ENCODE measurements at regions of chr11 and their contacts with region 1.

Region 1: DNA sequence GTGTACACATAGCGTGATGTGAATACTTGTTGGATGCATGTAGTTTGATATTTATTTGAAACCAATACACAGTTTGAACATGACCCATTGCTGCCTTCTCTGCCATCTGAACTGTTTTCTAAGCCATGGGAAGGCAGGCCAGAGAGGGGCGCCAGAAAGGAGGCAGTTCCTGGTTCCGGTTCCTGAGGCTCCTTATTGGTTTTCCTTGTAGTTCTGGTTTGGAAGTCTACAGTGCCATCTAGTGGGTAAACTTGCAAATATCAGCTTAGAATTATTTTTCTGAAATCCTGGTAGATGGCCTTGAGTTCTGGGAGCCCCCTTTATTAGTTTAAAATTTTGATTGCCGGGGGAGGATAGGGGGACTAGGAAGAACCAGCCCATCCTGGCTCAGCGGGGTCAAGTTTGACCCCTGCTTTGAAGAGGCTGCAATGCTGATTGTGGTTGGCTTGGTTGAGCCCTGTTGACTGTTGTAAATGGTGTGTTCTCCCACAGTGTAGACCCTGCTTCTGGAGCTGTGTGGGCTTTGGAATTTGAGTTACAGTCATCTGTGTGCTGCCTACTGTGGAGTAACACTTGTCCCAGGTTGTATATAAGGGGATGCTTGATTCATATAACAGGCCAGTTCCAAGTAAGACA is 48.4 kb downstream of the GRAMD1B start:
- DNase-seq: no peak

Region 2: GRCh38 chr11:122951211-122951610 is 527.3 kb before region 1 on chr11:
- intact Hi-C with region 1: no loop called
- DNase-seq: no peak

Region 3: DNA sequence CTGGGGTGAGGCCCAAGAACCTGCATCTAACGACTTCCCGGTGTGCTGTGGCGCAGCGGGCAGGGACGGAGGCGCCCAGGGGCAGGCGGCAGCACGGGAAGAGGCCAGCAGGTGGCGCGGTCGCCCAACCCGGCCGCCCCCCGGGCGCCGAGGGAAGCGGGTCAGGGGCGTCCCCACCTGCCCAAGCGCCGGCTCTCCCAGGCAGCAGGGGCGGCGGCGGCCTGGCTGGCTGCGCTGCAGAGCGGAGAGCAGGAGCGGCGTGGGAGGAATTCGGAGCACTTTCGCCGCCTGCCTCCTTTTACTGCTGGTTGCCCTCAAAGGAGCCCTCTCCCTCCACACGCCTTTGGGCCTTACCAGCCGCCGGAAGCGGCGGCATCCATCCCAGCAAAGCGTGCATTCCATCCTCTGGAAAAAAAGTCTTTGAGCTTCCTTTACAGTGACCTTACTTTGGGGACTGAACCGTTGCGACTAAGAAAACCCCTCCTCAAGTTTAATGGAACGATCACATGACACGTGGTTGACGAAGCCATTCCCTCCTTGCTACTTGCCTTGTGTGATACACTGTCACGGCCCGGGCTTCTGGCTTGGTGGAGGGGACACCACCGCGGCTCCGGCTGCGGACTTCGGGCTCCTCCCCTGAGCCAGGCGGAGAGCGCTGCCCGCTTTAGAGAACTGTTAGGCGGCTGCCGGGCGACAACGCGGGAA is 176.6 kb before region 1 on chr11:
- intact Hi-C with region 1: loop called (anchors 5 kb)
- DNase-seq: peak; percentile 86

Region 4: GRCh38 chr11:123407130-123407995 is 71.1 kb before region 1 on chr11:
- intact Hi-C with region 1: loop called in 1 of 2 experiments (anchors 5 kb)
- DNase-seq: no peak

Region 5: DNA sequence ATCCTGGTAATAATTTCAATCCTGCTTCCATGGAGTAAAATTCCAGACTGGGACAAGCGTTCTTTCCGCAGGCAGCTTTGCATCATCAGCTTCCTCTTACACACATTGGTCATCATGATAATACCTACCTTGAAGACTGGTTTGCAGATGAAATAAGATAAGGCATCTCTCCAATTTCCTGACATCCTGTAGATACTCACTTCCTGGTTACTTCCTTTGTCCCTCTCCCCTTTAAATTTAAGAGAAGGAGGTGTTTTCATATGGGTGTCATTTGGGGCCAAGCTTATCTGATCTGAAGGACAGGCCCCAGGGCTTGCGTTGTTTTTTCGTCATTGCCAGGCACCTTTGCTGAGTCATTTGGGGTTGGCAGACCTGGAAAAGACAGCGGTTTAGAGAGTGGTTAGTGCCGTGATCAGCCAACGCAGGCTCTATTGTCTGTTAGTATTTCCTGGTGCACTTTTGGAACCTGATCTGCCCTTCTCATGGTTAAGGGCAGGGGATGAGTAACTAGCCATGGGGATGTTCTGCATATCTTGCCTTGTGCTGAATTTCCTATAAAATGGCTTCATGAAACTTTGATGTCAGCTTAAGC is 24.3 kb before region 1 on chr11:
- intact Hi-C with region 1: no loop called
- DNase-seq: no peak

Region 6: GRCh38 chr11:123547180-123547579 is 68.7 kb after region 1 on chr11:
- intact Hi-C with region 1: no loop called
- DNase-seq: no peak